Tibial artery (tissue), 4 donors: ENCODE measurements at regions of chr16 and their contacts with region 1.

Region 1: GRCh38 chr16:70653809-70654771 is 7.7 kb downstream of the IL34 start:
- DNase-seq: peak; percentile 86 to 91
- H3K4me3 ChIP-seq: peak overlapping the region in 1 of 2 donors; percentile 17
- H3K27ac ChIP-seq: peak overlapping the region; percentile 40 to 41
- H3K4me1 ChIP-seq: peaks cover 0 to 6% (median 5%) of the 10 kb centered on the region in 4 donors
- H3K27me3 ChIP-seq: no peaks in the 10 kb centered on the region
- CTCF ChIP-seq: peak; percentile 87 to 96

Region 2: DNA sequence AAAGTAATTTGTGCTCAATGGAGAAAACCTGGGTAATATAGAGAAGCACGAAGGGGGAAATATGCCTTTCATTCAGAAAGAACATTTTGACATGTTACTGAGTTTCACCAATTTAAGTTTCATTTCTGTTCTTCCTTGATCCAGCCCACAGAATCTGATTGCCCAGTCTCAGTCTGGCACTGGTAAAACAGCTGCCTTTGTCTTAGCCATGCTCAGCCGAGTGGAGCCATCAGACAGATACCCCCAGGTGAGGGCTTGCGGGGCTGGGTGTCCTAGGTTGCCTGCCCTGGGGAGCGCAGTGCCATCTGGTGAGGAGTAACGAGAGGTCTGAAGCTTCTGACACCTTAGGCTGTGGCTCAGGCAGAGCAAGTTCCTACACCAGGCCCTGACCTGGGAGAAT is 289.7 kb before region 1 on chr16:
- intact Hi-C with region 1: loop called (anchors 10 kb)
- DNase-seq: no peak
- H3K4me3 ChIP-seq: no peak overlapping the region
- H3K27ac ChIP-seq: no peak overlapping the region
- H3K4me1 ChIP-seq: no peaks in the 10 kb centered on the region
- H3K27me3 ChIP-seq: no peaks in the 10 kb centered on the region
- CTCF ChIP-seq: no peak

Region 3: GRCh38 chr16:70478912-70479341 is 175.2 kb before region 1 on chr16:
- intact Hi-C with region 1: no loop called
- DNase-seq: peak in 1 of 2 donors; percentile 31
- H3K4me3 ChIP-seq: no peak overlapping the region
- H3K27ac ChIP-seq: no peak overlapping the region
- H3K4me1 ChIP-seq: peaks cover 0 to 15% (median 3%) of the 10 kb centered on the region in 4 donors
- H3K27me3 ChIP-seq: no peaks in the 10 kb centered on the region
- CTCF ChIP-seq: no peak

Region 4: GRCh38 chr16:70534971-70535370 is 119.1 kb before region 1 on chr16:
- intact Hi-C with region 1: loop called (anchors 5 kb)
- DNase-seq: no peak
- H3K4me3 ChIP-seq: no peak overlapping the region
- H3K27ac ChIP-seq: no peak overlapping the region
- H3K4me1 ChIP-seq: no peaks in the 10 kb centered on the region
- H3K27me3 ChIP-seq: no peaks in the 10 kb centered on the region
- CTCF ChIP-seq: no peak

Region 5: DNA sequence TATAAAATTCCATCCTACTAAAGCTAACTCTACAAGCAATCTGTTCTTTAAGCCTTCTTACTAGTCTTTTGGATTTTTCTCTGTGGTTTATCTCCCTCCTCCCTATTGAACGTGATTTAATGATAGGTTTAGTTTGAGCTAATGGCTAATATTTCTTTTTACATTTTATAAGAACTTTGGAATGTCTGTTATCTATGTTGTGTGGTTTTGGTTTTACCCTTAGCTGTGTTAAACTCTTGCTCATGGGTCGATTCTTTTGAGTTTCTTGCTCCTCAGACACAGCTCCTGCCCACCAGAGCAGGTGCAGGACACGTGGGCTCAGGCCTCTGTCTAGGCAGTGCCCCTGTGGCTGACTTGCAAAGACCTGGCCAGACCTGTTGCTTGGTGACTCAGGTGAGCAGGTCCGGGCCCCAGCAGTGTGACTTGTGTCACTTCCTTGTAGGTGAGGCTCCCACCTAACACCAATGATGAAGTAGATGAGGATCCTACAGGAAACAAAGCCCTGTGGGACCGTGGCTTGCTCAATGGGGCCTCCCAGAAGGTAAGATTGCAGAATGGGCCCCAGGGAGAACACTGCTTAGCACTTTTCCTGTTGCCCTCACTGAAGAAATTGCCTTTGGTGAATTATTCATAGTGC is 85.4 kb before region 1 on chr16:
- intact Hi-C with region 1: loop called (anchors 5 kb)
- DNase-seq: no peak
- H3K4me3 ChIP-seq: no peak overlapping the region
- H3K27ac ChIP-seq: no peak overlapping the region
- H3K4me1 ChIP-seq: peaks cover 0 to 17% (median 13%) of the 10 kb centered on the region in 4 donors
- H3K27me3 ChIP-seq: no peaks in the 10 kb centered on the region
- CTCF ChIP-seq: no peak